ENCODE measurements at regions of chrX and their contacts with region 1.

Region 1: GRCh38 chrX:47540754-47541538 is 20.1 kb upstream of the ARAF start:
- DNase-seq: peak; percentile 78
- H3K4me3 ChIP-seq: no peak overlapping the region
- H3K27ac ChIP-seq: peak overlapping the region; percentile 77 to 79
- H3K4me1 ChIP-seq: no peaks in the 10 kb centered on the region
- H3K27me3 ChIP-seq: no peaks in the 10 kb centered on the region
- CTCF ChIP-seq: peak; percentile 12 to 78 (median 62)
- POLR2A ChIP-seq: peak; percentile 37

Region 2: GRCh38 chrX:47556045-47556623 is 15.2 kb after region 1 on chrX:
- intact Hi-C with region 1: loop called (anchors 2 kb)
- DNase-seq: peak; percentile 87
- H3K4me3 ChIP-seq: peak overlapping the region; percentile 27 to 31
- H3K27ac ChIP-seq: peak overlapping the region; percentile 83 to 85
- H3K4me1 ChIP-seq: no peaks in the 10 kb centered on the region
- H3K27me3 ChIP-seq: no peaks in the 10 kb centered on the region
- CTCF ChIP-seq: no peak
- POLR2A ChIP-seq: peak; percentile 64

Region 3: GRCh38 chrX:47650164-47651042 is 109.5 kb after region 1 on chrX and contains the start of gene ELK1:
- intact Hi-C with region 1: loop called (anchors 5 kb)
- DNase-seq: peak; percentile 96
- H3K4me3 ChIP-seq: peak within 1 kb of the TSS; percentile 59 to 64
- H3K27ac ChIP-seq: peak within 1 kb of the TSS; percentile 81 to 84
- H3K4me1 ChIP-seq: no peaks in the 10 kb centered on the region
- H3K27me3 ChIP-seq: no peaks in the 10 kb centered on the region
- CTCF ChIP-seq: peak in 1 of 4 experiments; percentile 8
- POLR2A ChIP-seq: peak; percentile 61
- total RNA-seq, gene ELK1: 28.6 to 105 TPM

Region 4: GRCh38 chrX:48737213-48737938 is 1196.4 kb after region 1 on chrX:
- intact Hi-C with region 1: no loop called
- DNase-seq: peak; percentile 88
- H3K4me3 ChIP-seq: peak overlapping the region; percentile 41 to 47
- H3K27ac ChIP-seq: peak overlapping the region; percentile 84 to 86
- H3K4me1 ChIP-seq: no peaks in the 10 kb centered on the region
- H3K27me3 ChIP-seq: no peaks in the 10 kb centered on the region
- CTCF ChIP-seq: no peak
- POLR2A ChIP-seq: no peak

Measured in prostate gland (tissue), 2 donors.